ENCODE measurements at regions of chr3 and their contacts with region 1.

Region 1: DNA sequence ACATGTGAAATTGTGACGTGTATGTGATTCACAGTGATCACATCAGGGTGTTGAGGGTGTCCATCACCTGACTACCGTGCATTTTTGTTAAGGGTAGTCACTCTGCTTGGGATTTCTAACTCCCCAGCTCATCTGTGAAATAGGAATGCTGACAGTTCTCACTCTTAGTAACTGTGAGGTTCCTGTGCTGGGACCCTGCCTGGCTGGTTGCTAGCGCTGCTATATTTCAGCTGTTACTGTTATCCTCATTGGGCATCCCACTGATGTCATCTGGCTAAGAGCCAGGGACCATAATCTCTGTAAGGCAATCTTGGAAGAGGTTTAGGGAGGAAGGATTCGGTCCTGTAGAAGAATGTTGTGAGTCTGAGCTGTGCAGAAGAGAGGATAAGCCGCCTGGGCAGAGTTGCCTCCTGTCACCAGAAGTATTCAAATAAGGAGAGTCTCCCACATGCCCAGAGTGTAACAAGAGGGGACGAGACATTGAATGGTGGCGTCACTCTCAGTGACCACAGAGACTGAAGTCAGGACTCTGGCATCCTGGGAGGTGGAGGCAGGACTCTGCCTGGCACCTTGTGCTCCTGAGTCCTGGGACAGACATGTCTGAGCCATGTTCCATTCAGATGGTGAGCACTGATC is 52.1 kb downstream of the FBLN2 start:
- DNase-seq: peak; percentile 97
- H3K4me3 ChIP-seq: no peak overlapping the region
- H3K27ac ChIP-seq: peak overlapping the region; percentile 55
- H3K4me1 ChIP-seq: peaks cover 33% of the 10 kb centered on the region
- H3K27me3 ChIP-seq: no peaks in the 10 kb centered on the region
- CTCF ChIP-seq: no peak

Region 2: GRCh38 chr3:13548696-13549622 is 52.1 kb before region 1 on chr3 and contains the start of gene FBLN2:
- CTCF ChIA-PET with region 1: no interaction called
- dilution Hi-C with region 1: loop called (anchors 10 kb)
- in situ Hi-C with region 1: no loop called
- intact Hi-C with region 1: no loop called
- DNase-seq: no peak
- H3K4me3 ChIP-seq: no peak within 1 kb of the TSS
- H3K27ac ChIP-seq: no peak within 1 kb of the TSS
- H3K4me1 ChIP-seq: peaks cover 17% of the 10 kb centered on the region
- H3K27me3 ChIP-seq: peaks cover 10% of the 10 kb centered on the region
- CTCF ChIP-seq: no peak
- total RNA-seq, gene FBLN2: 2.2 TPM in 1 of 2 donors, not detected in the other

Region 3: GRCh38 chr3:13581485-13582380 is 19.3 kb before region 1 on chr3:
- CTCF ChIA-PET with region 1: no interaction called
- dilution Hi-C with region 1: no loop called
- in situ Hi-C with region 1: no loop called
- intact Hi-C with region 1: loop called (anchors 2 kb)
- DNase-seq: no peak
- H3K4me3 ChIP-seq: no peak overlapping the region
- H3K27ac ChIP-seq: no peak overlapping the region
- H3K4me1 ChIP-seq: no peaks in the 10 kb centered on the region
- H3K27me3 ChIP-seq: no peaks in the 10 kb centered on the region
- CTCF ChIP-seq: no peak

Region 4: GRCh38 chr3:13623099-13623654 is 22.1 kb after region 1 on chr3:
- CTCF ChIA-PET with region 1: no interaction called
- dilution Hi-C with region 1: no loop called
- in situ Hi-C with region 1: no loop called
- intact Hi-C with region 1: loop called (anchors 1 kb)
- DNase-seq: peak; percentile 86
- H3K4me3 ChIP-seq: no peak overlapping the region
- H3K27ac ChIP-seq: peak overlapping the region; percentile 58
- H3K4me1 ChIP-seq: peaks cover 16% of the 10 kb centered on the region
- H3K27me3 ChIP-seq: no peaks in the 10 kb centered on the region
- CTCF ChIP-seq: peak in 1 of 2 donors; percentile 24